B cell (primary cell): ENCODE measurements at regions of chr18 and their contacts with region 1.

Region 1: GRCh38 chr18:35122586-35123224 is 81.5 kb downstream of the MAPRE2 start:
- DNase-seq: peak; percentile 44
- ATAC-seq: peak; percentile 80
- H3K4me3 ChIP-seq: no peak overlapping the region
- H3K4me3 Mint-ChIP-seq: peak overlapping the region; percentile 13
- H3K27ac ChIP-seq: peak overlapping the region in 1 of 2 donors; percentile 11
- H3K27ac Mint-ChIP-seq: peak overlapping the region; percentile 64
- H3K4me1 ChIP-seq: peaks cover 2 to 12% of the 10 kb centered on the region in 2 donors
- H3K4me1 Mint-ChIP-seq: peaks cover 42% of the 10 kb centered on the region
- H3K27me3 ChIP-seq: no peaks in the 10 kb centered on the region
- H3K27me3 Mint-ChIP-seq: no peaks in the 10 kb centered on the region
- CTCF ChIP-seq: peak; percentile 23

Region 2: DNA sequence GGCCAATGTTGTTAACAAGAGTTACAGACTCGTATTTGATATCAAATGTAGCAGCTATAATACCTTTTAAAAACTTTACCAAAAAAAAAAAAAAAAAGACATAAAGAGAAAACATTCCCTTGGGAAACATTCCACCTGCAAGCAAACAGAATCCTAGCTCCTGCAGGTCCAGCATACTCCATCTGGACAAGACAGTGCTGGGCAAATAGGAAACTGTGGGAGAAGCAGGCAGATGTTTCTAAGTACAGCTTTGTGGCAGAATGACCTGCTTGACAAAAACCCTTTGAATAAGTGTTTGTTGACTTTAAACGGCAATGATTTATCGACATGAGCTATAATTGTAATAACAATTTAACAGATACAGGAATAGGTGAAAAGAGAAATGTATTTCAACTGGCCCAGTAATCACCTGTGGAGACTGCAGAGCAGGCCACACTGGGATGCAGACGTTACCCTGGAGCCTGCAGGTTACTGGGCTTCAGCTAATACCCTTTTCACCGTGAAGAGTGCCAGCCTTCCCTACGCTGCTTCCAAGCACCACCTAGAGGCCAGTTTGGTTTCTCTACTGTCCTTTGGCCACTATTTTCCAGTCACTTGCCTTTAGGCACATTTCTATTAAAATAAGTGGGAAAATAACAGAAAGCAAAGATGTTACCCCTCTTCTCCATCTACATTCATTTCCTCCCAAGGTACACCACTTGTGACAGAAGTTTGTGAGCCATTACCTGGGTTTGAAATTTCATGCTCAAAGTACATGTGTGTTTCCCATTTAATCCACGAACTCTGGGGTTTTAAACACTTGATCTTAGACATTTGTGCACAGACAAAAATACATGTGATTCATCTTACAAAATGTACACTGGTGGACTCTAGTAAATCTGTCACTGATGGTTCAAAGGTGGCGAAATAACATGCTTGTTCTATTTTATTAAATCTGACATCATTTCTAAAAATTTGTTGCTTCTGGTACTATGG is 21.2 kb after region 1 on chr18:
- CTCF ChIA-PET with region 1: interaction called, 10 read pairs
- POLR2A ChIA-PET with region 1: no interaction called
- intact Hi-C with region 1: no loop called
- DNase-seq: peak; percentile 52
- ATAC-seq: peak; percentile 67
- H3K4me3 ChIP-seq: no peak overlapping the region
- H3K4me3 Mint-ChIP-seq: no peak overlapping the region
- H3K27ac ChIP-seq: peak overlapping the region in 1 of 2 donors; percentile 31
- H3K27ac Mint-ChIP-seq: peak overlapping the region; percentile 6
- H3K4me1 ChIP-seq: peaks cover 24 to 28% of the 10 kb centered on the region in 2 donors
- H3K4me1 Mint-ChIP-seq: peaks cover 39% of the 10 kb centered on the region
- H3K27me3 ChIP-seq: no peaks in the 10 kb centered on the region
- H3K27me3 Mint-ChIP-seq: no peaks in the 10 kb centered on the region
- CTCF ChIP-seq: peak; percentile 55

Region 3: DNA sequence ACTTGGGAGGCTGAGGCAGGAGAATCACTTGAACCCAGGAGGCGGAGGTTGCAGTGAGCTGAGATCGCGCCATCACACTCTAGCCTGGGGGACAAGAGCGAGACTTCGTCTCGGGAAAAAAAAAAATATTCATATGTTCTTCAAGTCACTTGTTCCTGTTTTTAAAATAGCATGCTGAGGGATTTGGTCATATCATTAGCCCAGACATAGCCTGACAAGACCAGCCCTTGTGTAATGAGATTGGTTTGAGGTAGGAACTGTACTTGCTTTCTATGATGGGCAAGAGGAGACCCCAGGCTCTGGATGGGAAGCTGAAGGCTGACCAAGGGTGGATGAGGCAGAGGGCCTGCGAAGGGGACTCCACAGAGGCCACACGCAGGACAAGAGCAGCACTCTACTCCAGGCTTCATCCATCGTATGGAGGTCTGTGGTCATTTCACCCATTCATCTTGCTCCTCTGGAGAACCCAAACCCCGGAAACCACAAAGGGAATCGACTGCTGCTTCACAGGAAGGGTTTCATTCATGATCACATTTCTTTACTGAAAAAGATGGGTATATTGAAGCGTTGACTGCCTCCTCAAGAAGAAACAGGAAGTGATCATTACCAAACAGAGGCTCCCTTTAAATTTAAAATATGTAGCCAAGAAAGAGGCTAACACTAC is 31.0 kb after region 1 on chr18:
- CTCF ChIA-PET with region 1: no interaction called
- POLR2A ChIA-PET with region 1: no interaction called
- intact Hi-C with region 1: loop called (anchors 5 kb)
- DNase-seq: peak; percentile 46
- ATAC-seq: peak; percentile 28
- H3K4me3 ChIP-seq: no peak overlapping the region
- H3K4me3 Mint-ChIP-seq: peak overlapping the region; percentile 40
- H3K27ac ChIP-seq: peak overlapping the region; percentile 25 to 59
- H3K27ac Mint-ChIP-seq: peak overlapping the region; percentile 70
- H3K4me1 ChIP-seq: peaks cover 26% of the 10 kb centered on the region in 2 donors
- H3K4me1 Mint-ChIP-seq: peaks cover 28% of the 10 kb centered on the region
- H3K27me3 ChIP-seq: no peaks in the 10 kb centered on the region
- H3K27me3 Mint-ChIP-seq: no peaks in the 10 kb centered on the region
- CTCF ChIP-seq: no peak

Region 4: GRCh38 chr18:36809590-36810381 is 1687.1 kb after region 1 on chr18:
- CTCF ChIA-PET with region 1: no interaction called
- POLR2A ChIA-PET with region 1: no interaction called
- intact Hi-C with region 1: no loop called
- DNase-seq: peak; percentile 70
- ATAC-seq: peak; percentile 91
- H3K4me3 ChIP-seq: no peak overlapping the region
- H3K4me3 Mint-ChIP-seq: no peak overlapping the region
- H3K27ac ChIP-seq: no peak overlapping the region
- H3K27ac Mint-ChIP-seq: no peak overlapping the region
- H3K4me1 ChIP-seq: peaks cover 0 to 3% of the 10 kb centered on the region in 2 donors
- H3K4me1 Mint-ChIP-seq: peaks cover 2% of the 10 kb centered on the region
- H3K27me3 ChIP-seq: no peaks in the 10 kb centered on the region
- H3K27me3 Mint-ChIP-seq: no peaks in the 10 kb centered on the region
- CTCF ChIP-seq: peak; percentile 94